ENCODE measurements at regions of chr3 and their contacts with region 1.

Region 1: DNA sequence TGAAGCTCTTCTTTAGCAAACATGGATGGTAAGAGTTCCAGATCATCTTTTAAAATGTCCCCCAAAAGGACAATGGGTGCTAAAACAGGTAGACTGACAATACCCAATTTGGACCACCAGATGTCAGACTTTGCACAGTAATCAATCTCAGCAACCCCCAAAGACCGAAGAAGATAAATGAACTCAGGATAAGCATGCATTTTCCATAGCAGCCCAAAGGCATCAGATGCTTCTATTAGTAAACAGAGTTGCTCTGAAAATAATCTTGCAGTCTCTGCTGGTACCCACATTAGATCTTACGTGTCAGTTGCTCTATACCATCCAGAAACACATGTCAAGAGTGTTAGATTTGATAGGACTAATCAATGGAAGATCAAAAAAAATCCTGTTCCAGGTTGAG is 20.6 kb downstream of the MYH15 start:
- DNase-seq: peak in 1 of 2 donors; percentile 85
- ATAC-seq: peak; percentile 73 to 90 (median 87)
- H3K4me3 ChIP-seq: no peak overlapping the region
- H3K4me3 Mint-ChIP-seq: no peak overlapping the region
- H3K27ac ChIP-seq: no peak overlapping the region
- H3K27ac Mint-ChIP-seq: no peak overlapping the region
- H3K4me1 ChIP-seq: no peaks in the 10 kb centered on the region
- H3K4me1 Mint-ChIP-seq: no peaks in the 10 kb centered on the region
- H3K27me3 ChIP-seq: no peaks in the 10 kb centered on the region
- H3K27me3 Mint-ChIP-seq: peaks cover 0 to 2% of the 10 kb centered on the region in 2 donors
- CTCF ChIP-seq: peak; percentile 81

Region 2: GRCh38 chr3:108552267-108553159 is 62.7 kb after region 1 on chr3:
- intact Hi-C with region 1: loop called (anchors 1 kb)
- DNase-seq: peak in 1 of 2 donors; percentile 68
- ATAC-seq: peak in 2 of 3 donors; percentile 50 to 56
- H3K4me3 ChIP-seq: no peak overlapping the region
- H3K4me3 Mint-ChIP-seq: no peak overlapping the region
- H3K27ac ChIP-seq: no peak overlapping the region
- H3K27ac Mint-ChIP-seq: no peak overlapping the region
- H3K4me1 ChIP-seq: no peaks in the 10 kb centered on the region
- H3K4me1 Mint-ChIP-seq: no peaks in the 10 kb centered on the region
- H3K27me3 ChIP-seq: no peaks in the 10 kb centered on the region
- H3K27me3 Mint-ChIP-seq: no peaks in the 10 kb centered on the region
- CTCF ChIP-seq: peak; percentile 55

Region 3: DNA sequence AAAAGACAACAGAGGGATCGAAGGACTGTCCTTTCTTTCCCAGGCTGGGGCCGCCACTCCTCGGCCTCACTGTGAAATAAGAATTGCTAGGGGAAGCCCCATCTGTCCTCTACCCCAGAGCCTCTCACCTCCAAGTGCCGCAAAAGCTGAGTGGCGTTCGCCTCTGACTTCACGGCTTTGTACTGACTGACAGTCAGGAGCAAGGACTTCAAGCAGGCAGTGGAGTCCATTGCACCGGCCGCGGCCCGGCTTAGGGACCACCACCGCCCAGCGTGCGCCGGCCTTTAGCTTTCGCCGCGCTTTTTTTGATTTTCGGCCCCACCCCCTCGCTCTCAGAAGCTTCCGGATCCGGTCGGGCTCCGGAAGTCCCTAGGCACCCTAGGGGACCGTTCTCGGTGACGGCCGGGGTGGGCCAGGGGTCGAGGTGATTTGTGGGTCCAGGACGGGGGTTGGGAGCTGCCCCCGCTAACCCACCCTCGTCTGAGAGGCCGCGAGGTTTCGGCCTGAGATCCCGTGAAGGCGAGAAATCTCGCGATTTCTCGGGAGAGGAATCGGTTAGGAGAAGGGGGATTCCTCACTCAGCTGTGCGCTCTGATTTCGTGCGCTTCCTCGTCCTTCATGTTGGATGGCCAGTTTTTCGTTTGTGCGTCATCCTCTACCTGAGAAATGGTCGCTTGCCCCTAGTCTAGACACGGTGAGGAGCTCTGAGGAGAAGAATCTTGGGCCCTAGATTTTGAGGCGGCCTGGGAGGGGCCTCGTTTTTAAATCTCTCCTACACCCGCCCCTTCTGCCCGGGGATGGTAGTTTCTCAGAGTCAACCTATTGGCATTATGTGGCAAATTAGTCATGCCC is 99.6 kb after region 1 on chr3 and contains the starts of genes CIP2A and DZIP3:
- intact Hi-C with region 1: no loop called
- DNase-seq: peak; percentile 84 to 95
- ATAC-seq: peak; percentile 77 to 91 (median 80)
- H3K4me3 ChIP-seq: peak within 1 kb of the TSS; percentile 95
- H3K4me3 Mint-ChIP-seq: peak within 1 kb of the TSS; percentile 97
- H3K27ac ChIP-seq: peak within 1 kb of the TSS; percentile 98
- H3K27ac Mint-ChIP-seq: peak within 1 kb of the TSS; percentile 95 to 99
- H3K4me1 ChIP-seq: peaks cover 8% of the 10 kb centered on the region
- H3K4me1 Mint-ChIP-seq: peaks cover 28 to 34% of the 10 kb centered on the region in 2 donors
- H3K27me3 ChIP-seq: no peaks in the 10 kb centered on the region
- H3K27me3 Mint-ChIP-seq: no peaks in the 10 kb centered on the region
- CTCF ChIP-seq: no peak
- total RNA-seq, gene CIP2A: 3.6 to 8.5 (median 3.6) TPM
- total RNA-seq, gene DZIP3: 12.0 to 24.8 (median 20.8) TPM

Region 4: DNA sequence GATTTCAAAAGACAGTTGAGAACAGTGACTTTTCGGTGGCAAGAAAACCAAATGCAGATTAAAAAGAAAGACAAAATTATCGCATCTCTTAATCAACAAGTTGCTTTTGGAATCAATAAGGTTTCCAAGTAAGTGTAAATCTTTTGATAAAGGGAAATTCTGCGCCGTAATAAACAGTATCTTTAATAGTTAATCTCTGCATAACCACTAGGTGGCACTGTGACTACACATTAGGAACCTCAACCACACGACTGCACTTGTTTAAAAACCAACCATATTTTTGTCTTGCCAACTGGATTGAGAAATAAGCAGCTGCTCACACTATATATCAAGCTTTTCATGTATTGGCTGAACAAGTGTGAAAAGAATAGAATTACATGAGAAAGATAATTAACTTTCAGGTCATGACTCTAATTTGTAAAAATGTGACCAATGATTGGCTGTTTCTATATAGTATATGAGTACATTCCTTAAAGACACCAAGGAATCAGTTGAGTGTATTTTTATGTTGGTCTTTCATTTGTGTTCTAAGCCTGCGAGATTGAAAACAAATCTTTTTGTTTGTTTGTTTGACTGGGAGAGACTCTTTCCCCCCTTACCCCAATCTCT is 172.5 kb after region 1 on chr3:
- intact Hi-C with region 1: loop called (anchors 1 kb)
- DNase-seq: peak in 1 of 2 donors; percentile 89
- ATAC-seq: peak; percentile 85 to 93 (median 90)
- H3K4me3 ChIP-seq: no peak overlapping the region
- H3K4me3 Mint-ChIP-seq: no peak overlapping the region
- H3K27ac ChIP-seq: no peak overlapping the region
- H3K27ac Mint-ChIP-seq: no peak overlapping the region
- H3K4me1 ChIP-seq: no peaks in the 10 kb centered on the region
- H3K4me1 Mint-ChIP-seq: peaks cover 8 to 12% of the 10 kb centered on the region in 2 donors
- H3K27me3 ChIP-seq: no peaks in the 10 kb centered on the region
- H3K27me3 Mint-ChIP-seq: no peaks in the 10 kb centered on the region
- CTCF ChIP-seq: peak; percentile 86

Region 5: DNA sequence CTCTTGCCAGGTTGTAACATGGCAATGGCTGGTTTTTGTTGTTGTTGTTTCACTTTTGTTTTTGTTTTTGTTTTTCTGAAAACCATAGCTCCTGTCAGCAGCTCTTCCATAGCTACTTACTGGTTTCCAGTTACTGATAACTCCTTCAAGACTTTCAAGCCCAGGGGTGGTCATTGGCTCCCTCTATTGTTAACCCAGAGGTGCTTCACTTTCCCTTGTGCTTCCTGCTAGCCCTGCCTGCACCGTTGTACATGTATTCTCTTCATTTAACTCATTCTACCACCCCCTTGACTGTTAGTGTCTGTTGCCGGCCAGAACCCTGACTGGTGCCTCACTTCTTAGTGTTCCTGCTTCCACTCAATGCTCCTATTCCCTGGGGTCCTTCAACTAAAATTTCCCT is 328.6 kb after region 1 on chr3:
- intact Hi-C with region 1: loop called (anchors 5 kb)
- DNase-seq: peak; percentile 16 to 83
- ATAC-seq: peak; percentile 67 to 97 (median 97)
- H3K4me3 ChIP-seq: no peak overlapping the region
- H3K4me3 Mint-ChIP-seq: no peak overlapping the region
- H3K27ac ChIP-seq: no peak overlapping the region
- H3K27ac Mint-ChIP-seq: peak overlapping the region in 1 of 2 donors; percentile 5
- H3K4me1 ChIP-seq: no peaks in the 10 kb centered on the region
- H3K4me1 Mint-ChIP-seq: peaks cover 15 to 17% of the 10 kb centered on the region in 2 donors
- H3K27me3 ChIP-seq: no peaks in the 10 kb centered on the region
- H3K27me3 Mint-ChIP-seq: peaks cover 0 to 11% of the 10 kb centered on the region in 2 donors
- CTCF ChIP-seq: peak; percentile 53

Region 6: DNA sequence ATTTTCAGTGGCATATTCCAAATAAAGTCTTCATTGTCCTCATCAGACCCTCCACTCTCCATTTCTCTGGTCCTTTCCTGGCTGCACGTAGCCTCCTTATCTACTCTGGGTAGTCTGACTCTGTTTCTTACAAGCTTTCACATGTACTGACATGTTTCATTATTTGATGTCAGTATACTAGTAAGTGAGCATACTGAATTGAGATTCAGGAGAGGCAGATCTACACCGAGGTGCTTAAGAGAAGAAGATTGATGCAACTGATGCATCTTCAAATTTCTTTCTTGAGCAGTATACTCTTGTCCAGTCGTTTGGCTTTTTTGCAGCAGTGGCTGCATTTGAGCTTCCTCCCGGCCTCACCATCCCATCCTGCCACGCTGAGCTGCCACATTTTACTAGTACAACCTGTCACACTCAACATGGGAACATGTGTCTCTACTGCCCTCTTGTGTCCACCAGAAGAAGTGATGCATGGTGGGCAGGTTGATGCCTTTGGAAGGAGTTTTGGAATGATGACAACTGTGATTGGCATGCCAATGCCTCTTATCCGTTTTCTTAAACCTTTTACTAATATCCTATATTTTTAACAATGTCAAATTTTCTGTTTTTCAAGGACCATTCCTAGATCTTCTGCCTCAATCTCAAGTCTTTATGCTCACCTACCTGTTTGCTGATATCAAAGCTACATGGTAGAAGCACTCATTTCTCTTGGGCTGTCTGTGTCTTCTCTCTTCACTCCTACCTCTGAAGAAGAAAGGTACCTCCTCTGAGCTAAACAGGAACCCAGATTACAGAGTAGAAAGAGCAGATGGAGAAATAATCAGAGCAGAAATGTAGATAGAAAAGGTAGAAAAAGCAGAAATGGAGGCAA is 425.2 kb after region 1 on chr3:
- intact Hi-C with region 1: loop called (anchors 1 kb)
- DNase-seq: peak; percentile 21 to 88
- ATAC-seq: peak; percentile 77 to 92 (median 81)
- H3K4me3 ChIP-seq: no peak overlapping the region
- H3K4me3 Mint-ChIP-seq: no peak overlapping the region
- H3K27ac ChIP-seq: no peak overlapping the region
- H3K27ac Mint-ChIP-seq: no peak overlapping the region
- H3K4me1 ChIP-seq: peaks cover 3% of the 10 kb centered on the region
- H3K4me1 Mint-ChIP-seq: peaks cover 4 to 5% of the 10 kb centered on the region in 2 donors
- H3K27me3 ChIP-seq: no peaks in the 10 kb centered on the region
- H3K27me3 Mint-ChIP-seq: peaks cover 30 to 34% of the 10 kb centered on the region in 2 donors
- CTCF ChIP-seq: peak; percentile 92

Region 7: DNA sequence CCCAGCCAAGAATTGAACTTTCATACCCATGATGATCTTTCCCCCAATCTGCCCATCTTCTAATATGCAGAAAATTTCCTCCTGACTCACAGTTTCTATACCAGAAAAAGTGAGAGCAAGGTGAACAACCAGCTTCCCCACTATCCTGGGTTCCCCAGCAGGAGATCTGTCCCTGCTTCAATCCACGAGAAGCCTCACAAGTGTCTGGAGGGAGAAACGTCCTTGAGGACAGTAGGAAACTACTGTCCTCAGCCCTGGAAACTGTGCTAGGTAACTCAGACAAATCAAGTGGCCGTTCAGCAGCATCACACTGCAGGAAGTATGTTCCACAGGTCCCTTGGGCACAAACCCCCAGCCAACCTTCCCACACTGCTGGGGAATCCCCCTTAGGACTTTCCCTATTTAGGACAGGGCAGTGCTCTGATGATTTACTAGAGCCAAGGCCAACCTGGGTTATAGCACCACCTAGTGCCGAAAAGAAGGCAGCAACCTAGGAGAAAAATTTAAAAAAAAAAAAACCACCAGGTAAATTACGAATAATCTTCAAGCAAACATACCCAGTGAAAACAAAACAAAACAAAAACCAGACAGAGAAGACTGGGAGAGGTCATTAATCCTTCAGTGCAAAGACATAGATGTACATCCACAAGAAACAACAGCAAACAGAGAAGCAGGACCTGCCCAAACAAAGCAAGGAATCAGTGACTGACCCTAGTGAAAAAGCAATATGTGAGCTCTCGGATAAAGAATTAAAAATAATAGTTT is 592.2 kb after region 1 on chr3:
- intact Hi-C with region 1: loop called (anchors 2 kb)
- DNase-seq: peak in 1 of 2 donors; percentile 56
- ATAC-seq: peak in 2 of 3 donors; percentile 54 to 67
- H3K4me3 ChIP-seq: no peak overlapping the region
- H3K4me3 Mint-ChIP-seq: no peak overlapping the region
- H3K27ac ChIP-seq: no peak overlapping the region
- H3K27ac Mint-ChIP-seq: no peak overlapping the region
- H3K4me1 ChIP-seq: no peaks in the 10 kb centered on the region
- H3K4me1 Mint-ChIP-seq: no peaks in the 10 kb centered on the region
- H3K27me3 ChIP-seq: no peaks in the 10 kb centered on the region
- H3K27me3 Mint-ChIP-seq: peaks cover 2 to 18% of the 10 kb centered on the region in 2 donors
- CTCF ChIP-seq: peak; percentile 34

Region 8: DNA sequence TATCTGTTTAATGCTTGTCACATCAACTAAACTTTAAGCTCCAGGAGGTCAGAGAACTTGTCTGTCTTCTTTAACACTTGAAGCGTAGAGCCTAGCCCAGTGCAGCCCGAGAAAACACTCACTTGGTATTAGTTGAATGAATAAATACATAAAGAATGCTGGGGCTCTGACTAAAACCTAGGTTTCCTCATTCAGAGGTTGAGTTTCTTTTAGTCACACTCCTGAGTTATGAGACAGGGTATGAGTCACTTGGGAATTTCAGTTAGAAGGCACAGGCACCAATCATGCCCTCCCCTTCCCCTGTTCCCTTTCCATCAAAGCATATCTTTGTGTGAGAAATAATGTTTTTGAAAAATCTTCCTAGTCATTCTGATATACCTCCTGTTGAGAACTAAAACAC is 1437.4 kb after region 1 on chr3:
- intact Hi-C with region 1: no loop called
- DNase-seq: no peak
- ATAC-seq: no peak
- H3K4me3 ChIP-seq: no peak overlapping the region
- H3K4me3 Mint-ChIP-seq: no peak overlapping the region
- H3K27ac ChIP-seq: no peak overlapping the region
- H3K27ac Mint-ChIP-seq: no peak overlapping the region
- H3K4me1 ChIP-seq: no peaks in the 10 kb centered on the region
- H3K4me1 Mint-ChIP-seq: no peaks in the 10 kb centered on the region
- H3K27me3 ChIP-seq: peaks cover 2% of the 10 kb centered on the region
- H3K27me3 Mint-ChIP-seq: peaks cover 0 to 2% of the 10 kb centered on the region in 2 donors
- CTCF ChIP-seq: no peak